Left cardiac atrium (tissue), 4 donors: ENCODE measurements at regions of chr12 and their contacts with region 1.

Region 1: GRCh38 chr12:76037130-76038103 is 5.8 kb upstream of the PHLDA1 start:
- DNase-seq: no peak
- ATAC-seq: peak; percentile 62 to 66

Region 2: GRCh38 chr12:75526655-75527511 is 510.5 kb before region 1 on chr12:
- intact Hi-C with region 1: loop called (anchors 2 to 5 kb)
- DNase-seq: no peak
- ATAC-seq: peak; percentile 37 to 70

Region 3: GRCh38 chr12:75923964-75924666 is 113.3 kb before region 1 on chr12:
- intact Hi-C with region 1: no loop called
- DNase-seq: no peak
- ATAC-seq: no peak

Region 4: DNA sequence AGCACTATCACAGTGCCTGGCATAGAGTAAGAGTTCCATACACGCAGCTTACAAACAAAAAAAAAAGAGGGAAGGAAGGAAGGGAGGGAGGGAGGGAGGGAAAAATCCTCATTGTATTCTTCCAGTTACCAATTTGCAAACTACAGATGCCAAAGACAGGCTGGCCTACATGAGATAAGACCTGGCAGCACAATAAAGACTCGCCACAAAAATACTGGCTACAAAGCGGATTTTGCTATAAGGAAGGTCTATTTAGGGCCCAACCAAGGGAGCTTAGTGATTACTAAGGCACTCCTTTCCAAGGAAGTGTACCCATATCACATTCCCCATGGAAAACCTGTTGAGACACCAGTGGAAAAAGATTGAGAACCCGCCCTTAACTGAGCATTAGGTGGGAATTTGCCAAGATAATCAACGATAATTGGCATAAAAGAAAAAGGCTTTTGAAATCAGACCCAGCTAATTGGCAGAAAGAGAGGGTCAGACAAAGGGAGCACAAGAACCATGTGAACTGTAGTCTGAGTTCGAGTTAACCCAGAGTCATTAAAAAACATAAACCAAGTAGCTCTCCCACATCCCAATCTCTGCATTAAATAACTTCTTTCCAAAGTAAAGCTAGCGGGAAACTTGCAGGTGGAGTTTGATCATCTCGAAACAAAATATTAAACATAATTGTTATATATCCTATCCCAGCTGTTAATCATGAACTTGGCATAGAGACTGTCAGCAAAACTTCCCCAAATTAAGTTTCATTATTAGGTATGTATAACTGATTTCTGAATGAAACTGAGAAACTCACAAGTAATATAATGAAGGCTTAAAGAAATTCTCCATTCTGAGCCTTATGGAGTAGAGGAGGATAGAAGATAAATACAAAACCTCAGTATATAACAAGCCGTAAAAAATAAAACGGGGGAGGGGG is 55.9 kb before region 1 on chr12:
- intact Hi-C with region 1: no loop called
- DNase-seq: no peak
- ATAC-seq: no peak

Region 5: GRCh38 chr12:76266797-76267196 is 229.4 kb after region 1 on chr12:
- intact Hi-C with region 1: no loop called
- DNase-seq: peak; percentile 51
- ATAC-seq: peak; percentile 94 to 98

Region 6: GRCh38 chr12:76489737-76490136 is 452.3 kb after region 1 on chr12:
- intact Hi-C with region 1: no loop called
- DNase-seq: no peak
- ATAC-seq: no peak